H1 (cell line): ENCODE measurements at regions of chr19 and their contacts with region 1.

Region 1: GRCh38 chr19:10644260-10645007 is 9.7 kb upstream of the ILF3 start:
- DNase-seq: peak; percentile 68 to 95
- H3K4me3 ChIP-seq: no peak overlapping the region; a peak in 1 of 8 replicates
- H3K27ac ChIP-seq: 0 out of 2 replicates have a peak overlapping the region, but pooled peaks have one; percentile 26
- H3K4me1 ChIP-seq: peaks cover 6 to 17% (median 13%) of the 10 kb centered on the region in 4 experiments
- H3K27me3 ChIP-seq: no peaks in the 10 kb centered on the region
- CTCF ChIP-seq: peak; percentile 89 to 96 (median 94)
- EP300 ChIP-seq: no peak
- POLR2A ChIP-seq: no peak; a peak in 1 of 3 replicates
- RAD21 ChIP-seq: peak; percentile 88 to 89

Region 2: GRCh38 chr19:10568826-10569651 is 75.4 kb before region 1 on chr19 and contains the start of gene CDKN2D:
- CTCF ChIA-PET with region 1: interaction called, 25 read pairs
- POLR2A ChIA-PET with region 1: interaction called, 13 read pairs
- DNase-seq: peak; percentile 99
- H3K4me3 ChIP-seq: peak within 1 kb of the TSS; percentile 58 to 71 (median 70)
- H3K27ac ChIP-seq: peak within 1 kb of the TSS; percentile 79
- H3K4me1 ChIP-seq: peaks cover 0 to 19% (median 9%) of the 10 kb centered on the region in 4 experiments; a peak in 6 of 7 replicates
- H3K27me3 ChIP-seq: peaks cover 0 to 10% (median 7%) of the 10 kb centered on the region in 4 experiments; a peak in 4 of 7 replicates
- CTCF ChIP-seq: no peak
- EP300 ChIP-seq: no peak
- POLR2A ChIP-seq: peak; percentile 64 to 65
- RAD21 ChIP-seq: no peak
- total RNA-seq, gene CDKN2D: 2.6 and 3.0 TPM in 2 replicates

Region 3: DNA sequence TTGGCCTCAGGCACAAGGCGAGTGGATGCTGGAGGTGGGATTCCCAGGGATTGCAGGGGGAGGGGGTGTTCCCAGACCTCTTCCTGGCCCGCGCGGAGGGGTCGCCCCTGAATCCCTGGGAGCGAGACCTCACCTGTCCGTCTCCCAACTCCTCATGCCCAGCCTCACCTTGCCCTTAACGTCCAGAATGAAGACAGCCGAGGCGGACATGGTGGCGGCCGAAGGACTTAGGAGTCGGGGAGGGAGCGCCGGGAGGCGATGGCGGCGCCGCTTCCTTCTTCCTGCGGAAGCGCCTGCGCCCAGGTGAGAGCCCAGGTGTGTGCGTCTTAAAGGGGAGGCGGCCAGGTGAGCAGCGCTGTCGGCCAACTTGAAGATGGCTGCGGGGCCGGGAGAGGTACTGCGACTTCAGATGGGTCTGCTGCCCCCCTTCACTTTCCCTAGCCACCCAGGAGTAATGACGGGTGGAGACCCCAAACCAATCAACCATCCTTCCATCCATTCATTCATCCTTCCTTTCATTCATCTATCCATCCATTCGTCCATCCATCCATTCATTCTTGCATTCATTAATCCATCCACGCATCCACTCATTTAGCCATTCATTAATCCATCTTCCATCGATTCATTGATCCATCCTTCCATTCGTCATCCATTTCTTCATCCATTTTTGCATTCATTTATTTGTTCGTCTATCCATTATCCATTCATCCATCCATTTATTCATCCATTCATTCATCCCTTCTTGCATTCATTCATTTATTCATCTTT is 57.2 kb before region 1 on chr19 and contains the start of gene AP1M2:
- CTCF ChIA-PET with region 1: interaction called, 267 read pairs
- POLR2A ChIA-PET with region 1: interaction called, 27 read pairs
- DNase-seq: peak; percentile 53 to 79
- H3K4me3 ChIP-seq: peak within 1 kb of the TSS; percentile 84 to 97 (median 91)
- H3K27ac ChIP-seq: no peak within 1 kb of the TSS; the same call in 1 of the 2 replicates
- H3K4me1 ChIP-seq: no peaks in the 10 kb centered on the region
- H3K27me3 ChIP-seq: peaks cover 0 to 2% (median 0%) of the 10 kb centered on the region in 4 experiments; a peak in 1 of 7 replicates
- CTCF ChIP-seq: no peak
- EP300 ChIP-seq: no peak
- POLR2A ChIP-seq: no peak
- RAD21 ChIP-seq: peak in 1 of 2 experiments; percentile 9; a peak in 1 of 4 replicates
- total RNA-seq, gene AP1M2: 140 and 141 TPM in 2 replicates

Region 4: GRCh38 chr19:10612491-10613119 is 31.8 kb before region 1 on chr19:
- CTCF ChIA-PET with region 1: interaction called, 14 read pairs
- POLR2A ChIA-PET with region 1: interaction called, 4 read pairs
- DNase-seq: no peak
- H3K4me3 ChIP-seq: no peak overlapping the region
- H3K27ac ChIP-seq: no peak overlapping the region
- H3K4me1 ChIP-seq: no peaks in the 10 kb centered on the region
- H3K27me3 ChIP-seq: no peaks in the 10 kb centered on the region
- CTCF ChIP-seq: no peak
- EP300 ChIP-seq: no peak
- POLR2A ChIP-seq: no peak
- RAD21 ChIP-seq: no peak

Region 5: DNA sequence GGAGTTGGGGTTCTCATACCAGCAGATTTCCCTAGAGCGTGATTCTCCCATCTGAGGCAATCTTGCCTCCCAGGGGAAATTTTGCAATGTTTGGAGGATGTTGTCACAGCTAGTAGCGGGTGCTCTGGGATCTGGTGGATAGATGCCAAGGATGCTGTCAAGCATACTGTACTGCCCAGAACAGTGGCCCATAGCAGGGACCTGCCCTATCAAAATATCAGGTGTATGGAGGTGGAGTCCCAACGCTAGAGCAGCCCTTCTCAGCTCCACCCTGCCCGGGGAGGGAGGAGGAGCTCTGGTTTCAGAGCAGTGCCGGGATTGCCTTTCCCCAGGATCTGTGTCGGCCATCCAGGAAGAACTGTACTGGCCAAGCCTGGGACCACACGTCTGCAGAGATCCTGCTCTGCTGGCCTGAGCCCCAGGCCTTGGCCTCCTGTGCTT is 45.9 kb after region 1 on chr19:
- CTCF ChIA-PET with region 1: interaction called, 10 read pairs
- POLR2A ChIA-PET with region 1: interaction called, 1,874 read pairs
- DNase-seq: no peak
- H3K4me3 ChIP-seq: no peak overlapping the region
- H3K27ac ChIP-seq: no peak overlapping the region
- H3K4me1 ChIP-seq: peaks cover 0 to 6% (median 1%) of the 10 kb centered on the region in 4 experiments; a peak in 4 of 7 replicates
- H3K27me3 ChIP-seq: no peaks in the 10 kb centered on the region
- CTCF ChIP-seq: no peak
- EP300 ChIP-seq: no peak
- POLR2A ChIP-seq: no peak
- RAD21 ChIP-seq: no peak

Region 6: DNA sequence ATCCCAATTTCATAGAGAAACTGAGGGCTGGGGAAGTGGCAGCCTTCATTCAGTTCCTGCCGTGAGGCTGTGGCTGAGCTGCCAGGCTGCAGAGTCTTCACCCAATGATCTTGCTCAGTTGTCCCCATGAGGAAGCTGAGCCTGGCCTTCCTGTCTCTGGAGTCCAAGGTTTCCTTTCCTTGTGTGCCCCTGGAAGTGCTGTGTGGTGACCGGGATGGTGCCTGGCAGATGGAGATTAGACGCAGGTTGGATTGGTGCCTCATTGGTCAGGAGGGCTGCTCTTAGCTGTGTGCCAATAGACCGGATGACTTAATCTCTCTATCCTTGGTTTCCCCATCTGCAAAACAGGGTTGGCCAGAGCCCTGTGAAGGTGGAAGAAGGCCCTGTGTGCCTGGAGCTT is 98.0 kb after region 1 on chr19:
- CTCF ChIA-PET with region 1: no interaction called
- POLR2A ChIA-PET with region 1: no interaction called
- DNase-seq: no peak
- H3K4me3 ChIP-seq: no peak overlapping the region
- H3K27ac ChIP-seq: no peak overlapping the region
- H3K4me1 ChIP-seq: peaks cover 0 to 5% (median 1%) of the 10 kb centered on the region in 4 experiments; a peak in 2 of 7 replicates
- H3K27me3 ChIP-seq: no peaks in the 10 kb centered on the region
- CTCF ChIP-seq: no peak
- EP300 ChIP-seq: no peak
- POLR2A ChIP-seq: no peak
- RAD21 ChIP-seq: no peak